Esophagus squamous epithelium (tissue), 5 donors: ENCODE measurements at regions of chrX and their contacts with region 1.

Region 1: GRCh38 chrX:99698451-99698850 is 711.6 kb downstream of the PCDH19 start:
- DNase-seq: no peak
- H3K4me3 ChIP-seq: no peak overlapping the region
- H3K27ac ChIP-seq: no peak overlapping the region
- H3K4me1 ChIP-seq: no peaks in the 10 kb centered on the region
- H3K27me3 ChIP-seq: no peaks in the 10 kb centered on the region
- CTCF ChIP-seq: no peak
- POLR2A ChIP-seq: no peak

Region 2: DNA sequence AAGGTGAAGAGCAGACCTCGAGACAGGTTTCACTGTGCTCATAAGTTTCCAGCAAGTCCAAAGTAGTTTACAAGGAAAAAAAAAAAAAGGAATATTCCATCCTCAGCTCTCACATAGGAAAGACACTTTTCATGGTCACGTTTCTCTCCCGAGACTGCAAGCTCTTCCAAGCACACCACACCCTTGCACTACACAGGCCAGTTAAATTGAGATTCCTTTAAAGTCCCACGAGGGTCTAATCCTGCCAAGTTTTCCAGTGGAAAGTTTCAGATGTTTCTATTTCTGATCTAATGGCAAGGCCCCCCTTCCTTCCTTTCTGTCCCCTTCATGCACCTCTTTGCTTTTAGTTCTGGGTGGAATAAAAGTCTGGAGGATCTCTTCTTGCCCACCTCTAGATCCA is 779.5 kb after region 1 on chrX:
- intact Hi-C with region 1: loop called (anchors 10 kb)
- DNase-seq: no peak
- H3K4me3 ChIP-seq: no peak overlapping the region
- H3K27ac ChIP-seq: no peak overlapping the region
- H3K4me1 ChIP-seq: no peaks in the 10 kb centered on the region
- H3K27me3 ChIP-seq: no peaks in the 10 kb centered on the region
- CTCF ChIP-seq: no peak
- POLR2A ChIP-seq: no peak